Activated naive CD4-positive, alpha-beta T cell treated with anti-CD3 and anti-CD28 coated beads for 36 hours (primary cell): ENCODE measurements at regions of chr18 and their contacts with region 1.

Region 1: GRCh38 chr18:75727456-75727855 is 300.0 kb upstream of the SMIM21 start:
- DNase-seq: peak; percentile 66
- H3K4me3 Mint-ChIP-seq: no peak overlapping the region
- H3K27ac Mint-ChIP-seq: no peak overlapping the region
- H3K4me1 Mint-ChIP-seq: no peaks in the 10 kb centered on the region
- H3K27me3 Mint-ChIP-seq: peaks cover 34% of the 10 kb centered on the region

Region 2: DNA sequence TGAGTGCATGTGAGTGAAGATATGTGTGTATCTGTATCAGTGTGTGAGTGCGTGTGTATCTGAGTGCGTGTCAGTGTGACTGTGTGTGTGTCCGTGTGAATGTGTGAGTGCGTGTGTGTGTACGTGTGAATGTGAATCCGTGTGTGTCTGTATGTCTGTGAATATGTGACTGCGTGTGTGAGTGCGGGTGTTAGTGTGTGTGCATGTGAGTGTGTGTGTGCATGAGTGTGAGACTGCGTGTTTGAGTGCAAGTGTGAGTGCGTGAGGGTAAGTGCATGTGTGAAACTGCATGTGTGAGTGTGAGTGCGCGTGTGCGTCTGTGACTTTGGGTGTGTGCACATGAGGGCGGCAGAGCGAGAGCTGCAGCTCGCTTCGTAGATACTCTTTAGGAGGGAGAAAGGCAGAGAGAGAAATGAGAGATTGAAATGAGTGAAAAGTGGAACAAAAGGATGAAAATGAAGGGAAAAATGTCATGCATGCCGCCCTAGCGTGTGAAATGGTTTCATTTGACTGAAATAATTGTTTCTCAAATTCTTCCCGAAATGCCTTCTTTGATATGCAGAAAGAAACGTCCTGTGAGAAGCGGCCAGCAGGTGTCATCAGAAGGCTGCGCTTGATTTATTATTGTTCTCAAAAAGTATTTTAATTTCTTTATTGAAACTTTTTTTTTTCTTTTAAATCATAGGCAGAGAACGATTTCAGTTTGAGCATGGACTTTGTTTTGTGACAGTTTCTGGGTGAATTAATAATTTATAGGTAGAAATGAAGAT is 1104.2 kb before region 1 on chr18:
- CTCF ChIA-PET with region 1: no interaction called
- intact Hi-C with region 1: loop called (anchors 10 kb)
- DNase-seq: peak; percentile 64
- H3K4me3 Mint-ChIP-seq: no peak overlapping the region
- H3K27ac Mint-ChIP-seq: no peak overlapping the region
- H3K4me1 Mint-ChIP-seq: peaks cover 6% of the 10 kb centered on the region
- H3K27me3 Mint-ChIP-seq: no peaks in the 10 kb centered on the region

Region 3: GRCh38 chr18:75562216-75562615 is 165.2 kb before region 1 on chr18:
- CTCF ChIA-PET with region 1: no interaction called
- intact Hi-C with region 1: no loop called
- DNase-seq: no peak
- H3K4me3 Mint-ChIP-seq: no peak overlapping the region
- H3K27ac Mint-ChIP-seq: no peak overlapping the region
- H3K4me1 Mint-ChIP-seq: no peaks in the 10 kb centered on the region
- H3K27me3 Mint-ChIP-seq: peaks cover 16% of the 10 kb centered on the region